ENCODE measurements at regions of chr3 and their contacts with region 1.

Region 1: DNA sequence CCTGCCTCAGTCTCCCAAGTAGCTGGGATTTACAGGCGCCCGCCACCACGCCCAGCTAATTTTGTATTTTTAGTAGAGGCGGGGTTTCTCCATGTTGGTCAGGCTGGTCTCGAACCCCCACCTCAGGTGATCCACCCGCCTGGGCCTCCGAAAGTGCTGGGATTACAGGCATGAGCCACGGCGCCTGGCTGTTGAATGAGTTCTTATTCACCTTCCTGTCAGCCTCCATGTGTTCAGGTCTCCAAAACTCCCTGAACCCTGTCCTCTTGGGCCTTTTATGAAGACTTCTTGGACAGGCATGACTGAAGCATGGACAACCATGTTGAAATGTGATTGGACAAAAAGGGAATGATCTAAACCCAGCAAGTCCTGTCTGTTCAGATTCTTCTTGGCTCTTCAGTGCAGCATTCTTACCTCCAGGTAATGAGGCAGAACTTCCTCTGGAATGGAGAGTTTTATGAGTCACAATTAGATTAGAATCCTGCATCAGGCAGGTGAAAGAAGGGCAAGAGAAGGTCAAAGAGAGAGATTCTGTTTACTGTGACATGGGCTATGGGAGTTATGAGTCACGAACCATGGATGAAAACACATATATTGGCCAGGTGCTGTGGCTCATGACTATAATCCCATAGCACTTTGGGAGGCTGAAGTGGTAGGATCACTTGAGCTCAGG is 23.1 kb upstream of the EIF4A2 start:
- DNase-seq: peak; percentile 84
- ATAC-seq: peak; percentile 83
- H3K4me3 ChIP-seq: no peak overlapping the region
- H3K27ac ChIP-seq: peak overlapping the region; percentile 33; the same call in 1 of the 2 replicates
- H3K4me1 ChIP-seq: peaks cover 0 to 21% of the 10 kb centered on the region in 2 experiments; a peak in 2 of 4 replicates
- H3K27me3 ChIP-seq: no peaks in the 10 kb centered on the region
- CTCF ChIP-seq: no peak
- POLR2A ChIP-seq: no peak
- RAD21 ChIP-seq: peak; percentile 27

Region 2: DNA sequence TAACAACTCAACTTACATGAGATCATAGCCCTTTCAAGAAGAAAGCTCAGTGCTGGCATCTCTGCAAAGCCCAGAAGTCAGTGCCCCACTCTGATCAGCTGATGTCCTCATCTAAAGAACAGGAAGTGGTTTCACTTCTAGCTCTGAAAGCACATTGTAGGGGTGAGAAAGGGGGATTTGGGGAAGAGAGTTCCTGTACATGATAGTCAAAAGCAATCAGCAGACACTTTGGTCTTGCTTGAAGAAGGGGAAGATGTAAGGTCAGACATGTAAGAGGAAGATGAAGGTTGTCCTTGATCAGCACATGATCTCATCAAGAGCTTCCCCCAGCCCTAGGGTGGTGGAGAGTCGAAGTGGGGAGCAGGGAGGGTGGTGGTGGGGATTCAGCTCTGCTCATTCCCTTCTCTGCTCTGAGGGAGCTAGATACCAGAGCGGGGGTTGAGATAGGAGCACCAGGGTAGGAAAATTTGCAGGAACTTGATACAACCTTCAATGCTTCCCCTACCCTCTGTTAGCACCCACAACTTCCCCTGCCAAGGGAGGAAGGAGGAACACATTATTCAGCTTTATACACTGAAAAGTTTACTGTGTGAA is 575.0 kb before region 1 on chr3:
- CTCF ChIA-PET with region 1: no interaction called
- POLR2A ChIA-PET with region 1: no interaction called
- RAD21 ChIA-PET with region 1: no interaction called
- intact Hi-C with region 1: no loop called
- DNase-seq: no peak
- ATAC-seq: no peak
- H3K4me3 ChIP-seq: no peak overlapping the region
- H3K27ac ChIP-seq: no peak overlapping the region
- H3K4me1 ChIP-seq: no peaks in the 10 kb centered on the region
- H3K27me3 ChIP-seq: no peaks in the 10 kb centered on the region
- CTCF ChIP-seq: no peak
- POLR2A ChIP-seq: no peak
- RAD21 ChIP-seq: no peak

Region 3: GRCh38 chr3:186783073-186783730 is 22.9 kb after region 1 on chr3 and contains the start of gene EIF4A2:
- CTCF ChIA-PET with region 1: no interaction called
- POLR2A ChIA-PET with region 1: no interaction called
- RAD21 ChIA-PET with region 1: no interaction called
- intact Hi-C with region 1: loop called (anchors 1 kb)
- DNase-seq: peak; percentile 78
- ATAC-seq: peak; percentile 75
- H3K4me3 ChIP-seq: peak within 1 kb of the TSS; percentile 87 to 92
- H3K27ac ChIP-seq: peak within 1 kb of the TSS; percentile 99
- H3K4me1 ChIP-seq: peaks cover 0 to 13% of the 10 kb centered on the region in 2 experiments; a peak in 2 of 4 replicates
- H3K27me3 ChIP-seq: no peaks in the 10 kb centered on the region
- CTCF ChIP-seq: no peak
- POLR2A ChIP-seq: peak; percentile 100
- RAD21 ChIP-seq: no peak
- total RNA-seq, gene EIF4A2: 398 TPM

Region 4: GRCh38 chr3:187125319-187126031 is 365.2 kb after region 1 on chr3:
- CTCF ChIA-PET with region 1: no interaction called
- POLR2A ChIA-PET with region 1: no interaction called
- RAD21 ChIA-PET with region 1: no interaction called
- intact Hi-C with region 1: no loop called
- DNase-seq: no peak
- ATAC-seq: no peak
- H3K4me3 ChIP-seq: no peak overlapping the region
- H3K27ac ChIP-seq: no peak overlapping the region
- H3K4me1 ChIP-seq: no peaks in the 10 kb centered on the region
- H3K27me3 ChIP-seq: no peaks in the 10 kb centered on the region
- CTCF ChIP-seq: no peak
- POLR2A ChIP-seq: no peak
- RAD21 ChIP-seq: no peak

Region 5: GRCh38 chr3:187396661-187397060 is 636.4 kb after region 1 on chr3:
- CTCF ChIA-PET with region 1: no interaction called
- POLR2A ChIA-PET with region 1: no interaction called
- RAD21 ChIA-PET with region 1: no interaction called
- intact Hi-C with region 1: no loop called
- DNase-seq: no peak
- ATAC-seq: no peak
- H3K4me3 ChIP-seq: no peak overlapping the region
- H3K27ac ChIP-seq: no peak overlapping the region
- H3K4me1 ChIP-seq: peaks cover 0 to 2% of the 10 kb centered on the region in 2 experiments; a peak in 1 of 4 replicates
- H3K27me3 ChIP-seq: no peaks in the 10 kb centered on the region
- CTCF ChIP-seq: no peak
- POLR2A ChIP-seq: no peak
- RAD21 ChIP-seq: no peak

Measured in HCT116 (cell line).